ENCODE measurements at regions of chr1 and their contacts with region 1.

Region 1: GRCh38 chr1:60848583-60849188 is 233.7 kb upstream of the NFIA start:
- DNase-seq: no peak
- ATAC-seq: no peak
- H3K4me3 ChIP-seq: no peak overlapping the region
- H3K27ac ChIP-seq: no peak overlapping the region
- H3K4me1 ChIP-seq: no peaks in the 10 kb centered on the region
- H3K27me3 ChIP-seq: no peaks in the 10 kb centered on the region; a peak in 1 of 5 replicates
- CTCF ChIP-seq: peak; percentile 50
- EP300 ChIP-seq: no peak
- POLR2A ChIP-seq: no peak
- RAD21 ChIP-seq: no peak

Region 2: DNA sequence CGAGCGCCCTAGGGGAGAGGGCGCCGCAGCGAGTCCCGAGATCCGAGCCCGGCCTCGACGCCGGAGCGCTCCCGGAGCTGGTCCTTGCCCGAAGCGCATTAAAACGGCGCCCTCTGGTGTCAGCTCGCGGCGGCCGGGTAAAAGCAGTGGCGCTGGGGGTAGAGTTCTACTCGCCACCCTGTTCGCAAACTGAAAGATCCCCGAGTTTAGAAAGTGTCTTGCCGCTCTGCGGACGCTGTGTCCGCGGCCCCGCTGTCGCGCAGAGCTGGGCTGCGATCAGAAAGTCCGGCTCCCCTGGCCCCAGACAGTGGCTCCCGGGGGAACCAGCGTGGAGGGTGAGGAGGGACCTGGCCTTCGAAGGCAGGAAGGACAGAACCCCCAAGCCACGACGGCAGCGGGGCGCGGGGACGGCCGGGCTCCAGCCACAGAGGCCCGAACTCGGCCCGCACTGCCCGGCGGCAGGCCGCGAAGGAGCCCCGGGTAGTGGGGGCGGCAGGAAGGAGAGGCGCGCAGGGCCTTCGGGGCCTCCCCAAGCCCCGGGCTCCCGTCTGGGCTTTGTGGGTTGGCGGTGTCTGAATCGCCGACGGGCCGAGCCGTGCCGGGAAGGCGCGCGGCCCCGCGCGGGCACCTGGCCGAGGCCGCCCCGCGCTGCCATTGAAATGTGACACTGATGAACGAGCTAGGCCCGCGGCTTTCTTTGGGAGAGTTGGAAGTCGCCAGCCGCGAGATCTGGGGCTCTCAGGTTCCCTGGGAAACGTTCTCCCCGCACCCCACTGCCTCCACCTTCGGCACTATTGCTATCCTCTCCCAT is 194.5 kb after region 1 on chr1:
- CTCF ChIA-PET with region 1: interaction called, 8 read pairs
- POLR2A ChIA-PET with region 1: no interaction called
- in situ Hi-C with region 1: loop called (anchors 5 kb)
- intact Hi-C with region 1: loop called (anchors 5 kb)
- DNase-seq: peak; percentile 37
- ATAC-seq: peak; percentile 99
- H3K4me3 ChIP-seq: peak overlapping the region; percentile 26 to 75 (median 52); a peak in 5 of 6 replicates
- H3K27ac ChIP-seq: no peak overlapping the region
- H3K4me1 ChIP-seq: peaks cover 6% of the 10 kb centered on the region; the same call in 1 of the 2 replicates
- H3K27me3 ChIP-seq: peaks cover 2 to 16% of the 10 kb centered on the region in 2 experiments; a peak in 4 of 5 replicates
- CTCF ChIP-seq: peak; percentile 94
- EP300 ChIP-seq: no peak
- POLR2A ChIP-seq: no peak
- RAD21 ChIP-seq: peak; percentile 88

Region 3: DNA sequence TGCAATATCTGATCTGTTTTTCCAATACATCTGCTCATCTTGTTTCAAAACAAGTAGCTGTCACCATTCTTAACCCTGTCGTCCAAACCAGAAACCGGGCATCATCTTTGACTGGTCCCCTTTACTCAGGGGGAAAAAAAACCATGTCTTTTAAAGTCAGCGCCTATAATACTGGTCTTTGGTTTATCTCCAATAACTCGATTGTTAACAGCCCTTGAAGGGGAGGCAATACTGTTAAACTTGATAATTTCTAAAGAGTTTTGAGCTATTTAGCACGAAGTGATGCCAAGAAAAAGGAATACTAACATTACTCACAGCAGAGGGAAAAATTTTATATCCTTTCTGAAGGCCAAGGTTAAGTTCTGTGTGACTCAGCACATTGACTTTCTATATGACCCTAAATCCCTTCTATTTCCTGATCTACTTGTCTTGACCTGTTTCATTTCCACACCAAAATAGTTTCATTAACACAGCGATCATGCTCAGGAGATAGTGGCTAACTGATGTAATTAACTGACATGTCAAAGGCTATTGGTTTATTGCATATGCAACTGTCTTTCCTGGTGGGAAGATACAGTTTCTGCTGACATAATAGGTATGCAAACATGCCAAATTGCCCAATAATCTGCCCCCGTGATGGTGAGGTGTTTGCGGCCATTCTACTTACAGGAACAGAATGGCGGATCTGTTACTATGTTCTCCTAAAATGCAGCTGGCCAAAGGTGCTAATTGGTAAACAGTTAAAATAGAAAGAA is 292.8 kb after region 1 on chr1:
- CTCF ChIA-PET with region 1: no interaction called
- POLR2A ChIA-PET with region 1: no interaction called
- in situ Hi-C with region 1: no loop called
- intact Hi-C with region 1: no loop called
- DNase-seq: peak; percentile 27
- ATAC-seq: no peak
- H3K4me3 ChIP-seq: no peak overlapping the region
- H3K27ac ChIP-seq: no peak overlapping the region
- H3K4me1 ChIP-seq: peaks cover 54% of the 10 kb centered on the region
- H3K27me3 ChIP-seq: no peaks in the 10 kb centered on the region
- CTCF ChIP-seq: no peak
- EP300 ChIP-seq: no peak
- POLR2A ChIP-seq: no peak
- RAD21 ChIP-seq: no peak

Region 4: GRCh38 chr1:61453111-61453961 is 604.6 kb after region 1 on chr1:
- CTCF ChIA-PET with region 1: no interaction called
- POLR2A ChIA-PET with region 1: no interaction called
- in situ Hi-C with region 1: no loop called
- intact Hi-C with region 1: loop called (anchors 5 kb)
- DNase-seq: peak; percentile 92
- ATAC-seq: peak; percentile 74
- H3K4me3 ChIP-seq: no peak overlapping the region
- H3K27ac ChIP-seq: peak overlapping the region; percentile 36
- H3K4me1 ChIP-seq: peaks cover 48% of the 10 kb centered on the region
- H3K27me3 ChIP-seq: no peaks in the 10 kb centered on the region
- CTCF ChIP-seq: peak; percentile 73
- EP300 ChIP-seq: peak in 1 of 2 experiments; percentile 35; a peak in 1 of 4 replicates
- POLR2A ChIP-seq: peak; percentile 27 to 31; a peak in 1 of 4 replicates
- RAD21 ChIP-seq: 0 out of 2 replicates have a peak, but pooled peaks have one; percentile 41

Region 5: GRCh38 chr1:61588736-61589672 is 740.3 kb after region 1 on chr1:
- CTCF ChIA-PET with region 1: interaction called, 5 read pairs
- POLR2A ChIA-PET with region 1: no interaction called
- in situ Hi-C with region 1: no loop called
- intact Hi-C with region 1: loop called (anchors 1 kb)
- DNase-seq: peak; percentile 62
- ATAC-seq: peak; percentile 99
- H3K4me3 ChIP-seq: no peak overlapping the region
- H3K27ac ChIP-seq: no peak overlapping the region
- H3K4me1 ChIP-seq: no peaks in the 10 kb centered on the region
- H3K27me3 ChIP-seq: peaks cover 0 to 10% of the 10 kb centered on the region in 2 experiments; a peak in 4 of 5 replicates
- CTCF ChIP-seq: peak; percentile 89
- EP300 ChIP-seq: no peak
- POLR2A ChIP-seq: no peak
- RAD21 ChIP-seq: peak; percentile 54

Measured in HepG2 (cell line).